CD4-positive, alpha-beta T cell (primary cell): ENCODE measurements at regions of chr13 and their contacts with region 1.

Region 1: GRCh38 chr13:49792550-49793324 is at the start of gene KPNA3:
- DNase-seq: peak; percentile 90 to 98 (median 94)
- ATAC-seq: peak; percentile 89
- H3K4me3 ChIP-seq: peak within 1 kb of the TSS; percentile 84
- H3K4me3 Mint-ChIP-seq: peak within 1 kb of the TSS; percentile 100
- H3K27ac ChIP-seq: peak within 1 kb of the TSS; percentile 83 to 92
- H3K27ac Mint-ChIP-seq: peak within 1 kb of the TSS; percentile 95
- H3K4me1 ChIP-seq: peaks cover 22% of the 10 kb centered on the region
- H3K4me1 Mint-ChIP-seq: peaks cover 41% of the 10 kb centered on the region
- H3K27me3 ChIP-seq: no peaks in the 10 kb centered on the region
- H3K27me3 Mint-ChIP-seq: peaks cover 9% of the 10 kb centered on the region
- CTCF ChIP-seq: no peak
- total RNA-seq, gene KPNA3: 15.7 to 17.3 TPM

Region 2: DNA sequence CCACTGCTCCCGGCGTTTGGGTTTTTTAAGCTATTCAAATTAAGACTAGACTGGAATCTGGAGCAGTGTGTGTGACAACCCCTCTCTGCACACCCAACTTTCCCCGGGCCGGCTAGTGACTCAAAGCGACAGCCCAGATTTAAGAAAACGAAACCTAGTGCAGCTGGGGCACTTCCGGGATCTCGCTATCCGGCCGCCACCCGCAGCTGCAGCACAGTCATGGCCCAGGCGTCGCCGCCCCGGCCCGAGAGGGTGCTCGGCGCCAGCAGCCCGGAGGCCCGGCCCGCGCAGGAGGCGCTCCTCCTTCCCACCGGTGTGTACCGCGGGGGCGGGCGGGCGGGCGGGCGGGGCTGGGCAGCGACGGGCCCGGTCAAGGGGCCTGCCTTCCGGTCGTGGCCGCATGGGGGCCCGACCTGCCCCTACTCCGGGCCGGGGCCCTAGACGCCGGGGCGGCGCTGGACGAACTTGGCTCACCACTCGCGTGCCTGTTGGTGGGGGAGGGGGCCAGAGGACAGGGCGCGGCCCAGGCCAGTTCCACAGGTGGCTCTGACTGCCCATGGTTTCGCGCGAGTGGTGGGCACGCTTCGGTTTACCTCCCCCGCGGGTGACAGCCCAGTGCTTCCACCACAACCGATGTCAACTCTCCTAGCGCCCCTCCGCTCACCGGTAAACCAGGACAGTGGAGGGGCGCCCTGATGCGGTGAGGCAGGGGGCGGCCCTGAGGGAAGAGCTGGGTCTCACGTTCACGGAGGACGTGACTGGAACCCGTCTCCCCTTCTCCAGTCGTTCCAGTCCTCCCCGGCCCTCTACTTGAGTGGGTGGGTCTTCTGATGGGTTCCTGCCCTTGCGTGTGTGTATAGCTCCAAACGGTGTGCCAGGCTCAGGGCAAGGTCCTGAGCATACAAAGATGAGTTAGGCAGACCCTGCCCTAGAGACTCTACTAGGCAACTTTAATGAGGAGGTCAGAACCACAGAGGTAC is 296.7 kb before region 1 on chr13 and contains the start of gene PHF11:
- CTCF ChIA-PET with region 1: no interaction called
- POLR2A ChIA-PET with region 1: interaction called, 12 read pairs
- intact Hi-C with region 1: loop called in 1 of 2 experiments (anchors 10 kb)
- DNase-seq: peak; percentile 76 to 95 (median 84)
- ATAC-seq: peak; percentile 77
- H3K4me3 ChIP-seq: peak within 1 kb of the TSS; percentile 82
- H3K4me3 Mint-ChIP-seq: peak within 1 kb of the TSS; percentile 99
- H3K27ac ChIP-seq: peak within 1 kb of the TSS; percentile 88 to 94
- H3K27ac Mint-ChIP-seq: peak within 1 kb of the TSS; percentile 95
- H3K4me1 ChIP-seq: peaks cover 49% of the 10 kb centered on the region
- H3K4me1 Mint-ChIP-seq: peaks cover 63% of the 10 kb centered on the region
- H3K27me3 ChIP-seq: no peaks in the 10 kb centered on the region
- H3K27me3 Mint-ChIP-seq: no peaks in the 10 kb centered on the region
- CTCF ChIP-seq: no peak
- total RNA-seq, gene PHF11: 105 TPM

Region 3: DNA sequence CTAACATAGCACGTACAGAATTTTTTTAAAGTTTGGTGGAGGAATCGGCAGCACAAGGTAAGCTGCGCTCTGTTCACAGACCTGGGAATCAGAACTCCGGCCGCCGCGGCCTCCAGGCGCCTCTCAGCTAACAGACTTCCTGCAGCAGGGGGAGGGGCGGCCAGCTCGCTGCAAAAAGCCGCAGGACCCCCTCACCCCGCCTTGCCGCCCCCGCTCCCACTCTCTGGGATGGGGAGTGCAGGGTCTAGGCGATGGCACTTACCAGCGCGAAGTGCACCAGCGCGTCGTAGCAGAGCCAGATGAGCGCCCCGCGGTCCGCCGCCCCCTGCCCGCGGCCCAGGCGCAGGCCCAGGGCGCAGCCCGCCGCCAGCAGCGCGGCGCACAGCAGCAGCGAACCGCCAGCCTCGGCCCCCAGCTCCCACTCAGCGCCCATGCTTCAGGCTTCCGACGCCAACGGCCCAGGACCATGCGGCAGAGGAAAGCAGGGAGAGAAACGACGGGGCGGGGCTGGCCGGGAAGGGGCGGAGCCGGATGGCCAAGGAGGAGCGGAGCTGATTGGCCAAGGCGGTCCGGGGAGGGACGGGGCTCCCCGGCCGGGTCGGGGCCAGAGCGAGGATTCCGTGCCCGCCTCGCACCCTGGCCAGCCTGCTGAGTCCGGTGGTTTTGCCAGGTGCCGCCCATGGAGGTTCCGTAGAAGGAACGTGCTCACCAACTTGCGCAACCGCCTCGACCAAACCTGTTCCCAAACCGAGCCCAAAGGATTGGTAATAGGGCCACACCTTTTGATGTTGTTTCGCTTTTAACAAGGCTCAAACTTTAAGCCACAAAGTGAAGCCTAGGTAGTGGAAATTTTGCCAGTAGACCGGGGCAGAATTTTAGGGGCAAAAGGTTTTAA is 101.5 kb before region 1 on chr13 and contains the start of gene EBPL:
- CTCF ChIA-PET with region 1: interaction called, 3 read pairs
- POLR2A ChIA-PET with region 1: interaction called, 45 read pairs
- intact Hi-C with region 1: loop called in 1 of 2 experiments (anchors 2 kb)
- DNase-seq: peak; percentile 66 to 95 (median 84)
- ATAC-seq: peak; percentile 95
- H3K4me3 ChIP-seq: peak within 1 kb of the TSS; percentile 93
- H3K4me3 Mint-ChIP-seq: peak within 1 kb of the TSS; percentile 92
- H3K27ac ChIP-seq: peak within 1 kb of the TSS; percentile 49 to 52
- H3K27ac Mint-ChIP-seq: peak within 1 kb of the TSS; percentile 71
- H3K4me1 ChIP-seq: peaks cover 19% of the 10 kb centered on the region
- H3K4me1 Mint-ChIP-seq: peaks cover 52% of the 10 kb centered on the region
- H3K27me3 ChIP-seq: no peaks in the 10 kb centered on the region
- H3K27me3 Mint-ChIP-seq: no peaks in the 10 kb centered on the region
- CTCF ChIP-seq: no peak
- total RNA-seq, gene EBPL: 22.3 to 23.2 TPM

Region 4: DNA sequence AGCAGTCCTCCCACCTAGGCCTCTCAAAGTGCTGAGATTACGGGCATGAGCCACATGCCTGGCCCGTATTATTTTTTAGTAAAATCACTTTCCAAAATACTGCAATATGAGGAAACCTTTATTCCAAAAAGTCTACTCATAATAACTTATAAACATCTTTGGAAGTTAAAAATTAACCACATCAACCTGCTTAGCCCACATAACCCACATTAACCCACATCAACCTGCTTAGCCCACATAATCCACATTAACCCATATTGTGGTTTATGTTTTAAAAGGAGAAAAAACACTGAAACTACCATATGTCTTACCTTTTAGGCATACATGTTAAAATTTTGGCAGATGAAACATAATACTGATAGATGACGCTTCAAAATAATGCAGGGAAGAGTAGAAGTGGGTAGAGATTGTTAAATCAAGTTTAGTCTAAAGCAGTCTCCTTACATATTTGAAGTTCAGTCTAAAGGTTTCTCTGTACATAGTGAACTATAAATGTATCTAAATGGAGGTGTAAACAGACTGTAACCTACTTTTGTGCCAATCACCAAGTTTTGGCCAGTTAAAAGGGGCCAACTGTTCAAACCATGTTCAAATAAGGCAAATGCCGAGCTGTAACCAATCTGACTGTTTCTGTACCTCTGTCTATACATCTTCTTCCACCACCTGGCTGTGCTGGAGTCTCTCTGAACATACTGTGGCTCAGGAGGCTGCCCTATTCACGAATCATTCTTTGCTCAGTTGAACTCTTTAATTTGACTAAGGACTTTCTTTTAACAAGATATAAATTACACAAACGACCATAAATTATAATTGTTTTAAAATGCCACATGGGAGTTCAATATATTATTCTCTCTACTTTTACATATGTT is 14.8 kb before region 1 on chr13:
- CTCF ChIA-PET with region 1: interaction called, 4 read pairs
- POLR2A ChIA-PET with region 1: interaction called, 23 read pairs
- intact Hi-C with region 1: no loop called
- DNase-seq: peak in 1 of 14 experiments; percentile 9
- ATAC-seq: no peak
- H3K4me3 ChIP-seq: no peak overlapping the region
- H3K4me3 Mint-ChIP-seq: no peak overlapping the region
- H3K27ac ChIP-seq: no peak overlapping the region
- H3K27ac Mint-ChIP-seq: no peak overlapping the region
- H3K4me1 ChIP-seq: peaks cover 5% of the 10 kb centered on the region
- H3K4me1 Mint-ChIP-seq: peaks cover 71% of the 10 kb centered on the region
- H3K27me3 ChIP-seq: no peaks in the 10 kb centered on the region
- H3K27me3 Mint-ChIP-seq: no peaks in the 10 kb centered on the region
- CTCF ChIP-seq: no peak

Region 5: GRCh38 chr13:49936085-49936940 is 143.6 kb after region 1 on chr13 and contains the start of gene SPRYD7:
- CTCF ChIA-PET with region 1: interaction called, 6 read pairs
- POLR2A ChIA-PET with region 1: interaction called, 9 read pairs
- intact Hi-C with region 1: loop called (anchors 5 to 10 kb)
- DNase-seq: peak; percentile 86 to 97 (median 92)
- ATAC-seq: peak; percentile 82
- H3K4me3 ChIP-seq: peak within 1 kb of the TSS; percentile 91
- H3K4me3 Mint-ChIP-seq: peak within 1 kb of the TSS; percentile 98
- H3K27ac ChIP-seq: no peak within 1 kb of the TSS
- H3K27ac Mint-ChIP-seq: peak within 1 kb of the TSS; percentile 83
- H3K4me1 ChIP-seq: peaks cover 18% of the 10 kb centered on the region
- H3K4me1 Mint-ChIP-seq: peaks cover 19% of the 10 kb centered on the region
- H3K27me3 ChIP-seq: no peaks in the 10 kb centered on the region
- H3K27me3 Mint-ChIP-seq: no peaks in the 10 kb centered on the region
- CTCF ChIP-seq: peak; percentile 74
- total RNA-seq, gene SPRYD7: 1.1 to 1.5 TPM